CD4-positive, alpha-beta T cell (primary cell): ENCODE measurements at regions of chr10 and their contacts with region 1.

Region 1: DNA sequence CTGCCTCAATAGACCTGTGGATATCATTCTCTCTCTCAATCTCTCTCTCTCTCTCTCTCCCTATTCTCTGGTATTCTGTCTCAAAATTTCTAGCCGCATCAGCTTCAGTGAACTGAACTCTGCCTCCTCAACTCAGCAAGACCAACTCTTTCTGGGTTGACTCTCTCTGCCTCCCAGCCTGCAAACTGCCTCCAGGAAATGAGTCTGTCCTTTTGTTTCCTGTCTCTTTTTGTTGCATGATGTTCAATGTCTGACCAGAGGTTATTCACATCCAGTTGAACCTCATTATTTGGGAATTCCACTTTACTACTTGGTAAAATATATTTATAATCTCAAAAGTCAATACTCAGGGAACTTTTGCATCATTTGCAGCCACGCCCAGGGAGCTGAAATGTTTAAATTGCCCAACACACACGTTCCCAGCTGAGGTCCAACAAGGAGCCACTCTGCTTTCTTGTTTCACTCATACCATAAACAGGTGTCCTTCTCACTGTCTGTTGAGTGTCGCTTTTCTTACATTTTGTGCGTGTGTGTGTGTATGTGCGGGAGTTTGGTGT is 682.8 kb upstream of the FZD8 start:
- DNase-seq: no peak
- ATAC-seq: no peak
- H3K4me3 ChIP-seq: no peak overlapping the region
- H3K4me3 Mint-ChIP-seq: no peak overlapping the region
- H3K27ac ChIP-seq: no peak overlapping the region
- H3K27ac Mint-ChIP-seq: no peak overlapping the region
- H3K4me1 ChIP-seq: no peaks in the 10 kb centered on the region
- H3K4me1 Mint-ChIP-seq: no peaks in the 10 kb centered on the region
- H3K27me3 ChIP-seq: no peaks in the 10 kb centered on the region
- H3K27me3 Mint-ChIP-seq: no peaks in the 10 kb centered on the region
- CTCF ChIP-seq: no peak

Region 2: DNA sequence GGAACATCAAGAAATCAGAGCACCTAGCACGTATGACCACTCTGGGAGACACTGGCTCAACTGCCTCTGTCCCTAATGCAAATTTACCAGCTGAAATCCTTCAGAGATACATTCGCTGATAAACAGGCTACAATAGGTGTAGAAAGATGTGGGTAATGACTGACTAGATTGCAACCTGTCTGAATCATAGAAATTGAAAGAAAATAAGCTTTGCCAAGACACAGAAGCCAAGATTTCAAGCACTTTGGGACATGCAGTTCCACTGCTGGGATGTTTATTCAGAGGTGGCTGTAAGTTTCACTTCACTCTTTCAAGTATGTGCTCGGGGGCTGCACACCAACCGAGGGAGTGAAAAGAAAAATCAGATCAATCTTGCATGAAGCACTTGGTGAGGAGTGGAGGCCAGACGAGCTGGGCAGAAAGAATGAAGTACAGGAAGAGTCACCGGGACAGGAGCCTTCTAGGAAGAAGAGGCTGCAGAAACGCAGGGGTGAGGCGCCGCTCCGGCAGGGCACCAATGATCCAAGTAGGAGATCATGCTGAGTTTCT is 1786.6 kb before region 1 on chr10:
- CTCF ChIA-PET with region 1: no interaction called
- POLR2A ChIA-PET with region 1: no interaction called
- intact Hi-C with region 1: no loop called
- DNase-seq: no peak
- ATAC-seq: no peak
- H3K4me3 ChIP-seq: no peak overlapping the region
- H3K4me3 Mint-ChIP-seq: no peak overlapping the region
- H3K27ac ChIP-seq: no peak overlapping the region
- H3K27ac Mint-ChIP-seq: no peak overlapping the region
- H3K4me1 ChIP-seq: no peaks in the 10 kb centered on the region
- H3K4me1 Mint-ChIP-seq: no peaks in the 10 kb centered on the region
- H3K27me3 ChIP-seq: no peaks in the 10 kb centered on the region
- H3K27me3 Mint-ChIP-seq: no peaks in the 10 kb centered on the region
- CTCF ChIP-seq: no peak

Region 3: DNA sequence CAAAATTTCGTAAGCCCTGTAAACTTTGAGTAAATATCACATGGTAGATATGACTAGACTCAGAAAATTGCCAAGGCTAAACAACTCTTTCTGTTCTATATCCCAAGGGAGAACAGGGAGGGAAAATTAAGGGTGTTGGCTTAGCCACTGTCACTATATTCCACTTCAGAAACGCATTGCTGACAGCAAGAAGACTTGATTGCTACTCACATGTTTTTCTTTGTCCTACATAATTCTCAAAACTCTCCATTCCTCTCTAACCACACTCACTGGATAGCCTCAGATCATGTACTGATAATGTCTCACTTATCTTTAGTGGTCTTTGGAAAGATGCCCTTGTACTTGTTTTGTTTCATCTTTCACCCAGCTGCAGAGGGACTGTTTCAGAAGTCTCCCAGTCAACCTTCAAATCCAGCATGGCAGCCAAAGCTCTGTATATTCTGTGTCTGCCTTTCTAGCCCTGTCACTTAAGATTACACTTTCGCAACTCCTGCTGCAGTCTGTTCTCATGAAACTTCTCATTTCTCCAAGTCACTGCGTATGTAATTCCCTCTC is 100.4 kb before region 1 on chr10:
- CTCF ChIA-PET with region 1: no interaction called
- POLR2A ChIA-PET with region 1: no interaction called
- intact Hi-C with region 1: no loop called
- DNase-seq: no peak
- ATAC-seq: no peak
- H3K4me3 ChIP-seq: no peak overlapping the region
- H3K4me3 Mint-ChIP-seq: no peak overlapping the region
- H3K27ac ChIP-seq: no peak overlapping the region
- H3K27ac Mint-ChIP-seq: no peak overlapping the region
- H3K4me1 ChIP-seq: no peaks in the 10 kb centered on the region
- H3K4me1 Mint-ChIP-seq: no peaks in the 10 kb centered on the region
- H3K27me3 ChIP-seq: no peaks in the 10 kb centered on the region
- H3K27me3 Mint-ChIP-seq: no peaks in the 10 kb centered on the region
- CTCF ChIP-seq: no peak

Region 4: DNA sequence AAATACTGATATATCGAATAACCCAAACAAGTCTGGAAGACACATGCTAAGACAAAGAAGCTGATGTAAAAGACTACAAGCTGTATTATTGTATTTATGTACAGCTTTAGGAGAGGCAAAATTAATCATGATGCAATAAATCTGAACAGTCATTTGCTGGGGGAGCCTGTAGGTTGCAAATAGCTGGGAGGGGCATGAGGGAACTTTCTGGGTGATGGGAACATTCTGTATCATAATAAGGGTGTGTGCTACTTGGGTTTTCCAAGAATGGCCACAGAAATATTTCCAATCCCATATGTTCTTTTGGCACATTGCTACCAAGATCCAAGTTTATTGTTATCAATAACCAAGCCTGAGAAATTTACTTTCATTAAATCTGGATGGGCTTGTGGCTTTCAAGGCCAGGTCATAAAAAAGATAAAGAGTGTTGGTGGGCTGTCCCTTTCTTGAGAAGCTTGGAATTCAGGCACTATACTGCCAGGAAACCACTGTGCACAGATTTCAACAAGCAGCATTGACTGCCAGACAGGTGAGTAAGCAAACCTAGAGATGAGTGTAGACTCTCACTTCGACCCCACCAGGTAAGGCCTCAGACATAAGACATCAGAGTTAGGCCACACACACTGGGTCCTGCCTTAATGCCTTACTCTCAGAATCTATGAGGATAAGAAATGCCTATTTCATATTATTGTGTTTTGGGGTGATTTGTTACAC is 53.1 kb before region 1 on chr10:
- CTCF ChIA-PET with region 1: no interaction called
- POLR2A ChIA-PET with region 1: no interaction called
- intact Hi-C with region 1: loop called in 1 of 2 experiments (anchors 5 kb)
- DNase-seq: no peak
- ATAC-seq: no peak
- H3K4me3 ChIP-seq: no peak overlapping the region
- H3K4me3 Mint-ChIP-seq: no peak overlapping the region
- H3K27ac ChIP-seq: no peak overlapping the region
- H3K27ac Mint-ChIP-seq: no peak overlapping the region
- H3K4me1 ChIP-seq: no peaks in the 10 kb centered on the region
- H3K4me1 Mint-ChIP-seq: no peaks in the 10 kb centered on the region
- H3K27me3 ChIP-seq: no peaks in the 10 kb centered on the region
- H3K27me3 Mint-ChIP-seq: no peaks in the 10 kb centered on the region
- CTCF ChIP-seq: no peak

Region 5: DNA sequence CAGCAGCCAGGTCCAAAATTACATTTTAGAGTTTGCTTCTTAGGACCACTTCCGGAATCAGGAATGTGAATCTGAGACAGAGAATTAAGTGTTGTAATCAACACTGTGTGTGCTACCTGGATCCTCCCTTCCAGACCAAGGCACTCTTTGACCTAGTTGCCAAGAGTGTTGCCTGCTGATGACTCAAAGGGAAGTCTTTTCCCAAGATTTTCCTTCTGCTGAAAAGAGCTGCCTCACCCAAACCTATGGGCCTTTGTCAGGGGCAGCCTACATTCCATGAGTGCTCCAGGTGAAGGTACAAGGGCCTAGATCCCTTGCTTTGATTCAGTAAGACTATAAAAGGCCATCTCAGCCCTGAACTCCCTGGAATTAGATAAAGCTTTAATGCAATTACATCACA is 88.0 kb after region 1 on chr10:
- CTCF ChIA-PET with region 1: no interaction called
- POLR2A ChIA-PET with region 1: no interaction called
- intact Hi-C with region 1: no loop called
- DNase-seq: no peak
- ATAC-seq: no peak
- H3K4me3 ChIP-seq: no peak overlapping the region
- H3K4me3 Mint-ChIP-seq: no peak overlapping the region
- H3K27ac ChIP-seq: no peak overlapping the region
- H3K27ac Mint-ChIP-seq: no peak overlapping the region
- H3K4me1 ChIP-seq: no peaks in the 10 kb centered on the region
- H3K4me1 Mint-ChIP-seq: no peaks in the 10 kb centered on the region
- H3K27me3 ChIP-seq: no peaks in the 10 kb centered on the region
- H3K27me3 Mint-ChIP-seq: no peaks in the 10 kb centered on the region
- CTCF ChIP-seq: no peak